Breast epithelium (tissue), 4 donors: ENCODE measurements at regions of chr2 and their contacts with region 1.

Region 1: GRCh38 chr2:61493523-61493942 is 22.6 kb upstream of the USP34 start:
- DNase-seq: no peak
- H3K4me3 ChIP-seq: no peak overlapping the region
- H3K27ac ChIP-seq: no peak overlapping the region
- H3K4me1 ChIP-seq: no peaks in the 10 kb centered on the region
- H3K27me3 ChIP-seq: no peaks in the 10 kb centered on the region
- CTCF ChIP-seq: no peak
- POLR2A ChIP-seq: no peak

Region 2: GRCh38 chr2:61538200-61538919 is 44.8 kb after region 1 on chr2 and contains the start of gene XPO1:
- intact Hi-C with region 1: loop called (anchors 2 kb)
- DNase-seq: peak; percentile 99
- H3K4me3 ChIP-seq: peak within 1 kb of the TSS; percentile 79 to 95 (median 84)
- H3K27ac ChIP-seq: peak within 1 kb of the TSS; percentile 99
- H3K4me1 ChIP-seq: no peaks in the 10 kb centered on the region
- H3K27me3 ChIP-seq: no peaks in the 10 kb centered on the region
- CTCF ChIP-seq: peak in 1 of 3 donors; percentile 37
- POLR2A ChIP-seq: peak; percentile 94
- total RNA-seq, gene XPO1: 76.0 to 137 (median 129) TPM